ENCODE measurements at regions of chr5 and their contacts with region 1.

Region 1: GRCh38 chr5:62231576-62231975 is 74.4 kb upstream of the KIF2A start:
- DNase-seq: no peak

Region 2: DNA sequence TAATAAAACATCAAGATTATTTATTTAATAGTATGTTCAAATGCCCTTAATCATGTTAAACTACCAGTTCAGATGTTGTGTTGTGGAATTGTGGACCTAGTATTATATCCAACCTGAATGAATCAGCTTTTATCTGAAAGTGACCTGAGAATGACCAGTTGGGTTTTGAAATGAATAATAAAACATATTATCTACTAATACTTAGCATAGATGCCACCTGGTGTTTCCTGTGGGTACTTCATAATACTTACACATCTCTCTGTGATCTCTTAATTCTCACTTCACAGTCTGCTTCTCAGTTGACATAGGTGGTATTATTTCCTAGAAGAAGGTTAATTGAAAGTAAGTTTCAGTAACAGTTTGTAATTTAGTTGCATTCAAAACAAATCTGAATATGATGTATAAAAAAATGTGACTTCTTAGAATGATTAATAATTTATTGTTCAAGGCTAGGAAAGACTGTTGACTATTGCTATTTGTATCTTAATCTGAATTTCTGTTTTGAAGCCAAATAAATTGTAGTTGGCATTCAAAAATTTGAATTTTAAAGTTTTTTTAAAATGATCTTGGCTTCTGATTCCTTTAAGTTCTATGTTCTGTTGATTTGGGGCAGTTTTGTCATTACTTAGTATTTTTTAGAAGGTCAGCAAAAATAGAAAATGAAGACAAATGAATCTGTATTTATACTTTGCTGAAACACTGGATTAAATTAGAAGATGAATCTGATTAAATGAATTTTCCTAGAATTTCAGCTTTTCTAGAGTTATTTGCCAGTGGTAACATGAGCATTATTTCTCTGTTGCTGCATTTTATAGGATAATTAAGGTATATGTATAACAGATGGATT is 122.7 kb after region 1 on chr5:
- intact Hi-C with region 1: loop called in 1 of 2 experiments (anchors 10 kb)
- DNase-seq: no peak